MCF 10A (cell line): ENCODE measurements at regions of chr1 and their contacts with region 1.

Region 1: DNA sequence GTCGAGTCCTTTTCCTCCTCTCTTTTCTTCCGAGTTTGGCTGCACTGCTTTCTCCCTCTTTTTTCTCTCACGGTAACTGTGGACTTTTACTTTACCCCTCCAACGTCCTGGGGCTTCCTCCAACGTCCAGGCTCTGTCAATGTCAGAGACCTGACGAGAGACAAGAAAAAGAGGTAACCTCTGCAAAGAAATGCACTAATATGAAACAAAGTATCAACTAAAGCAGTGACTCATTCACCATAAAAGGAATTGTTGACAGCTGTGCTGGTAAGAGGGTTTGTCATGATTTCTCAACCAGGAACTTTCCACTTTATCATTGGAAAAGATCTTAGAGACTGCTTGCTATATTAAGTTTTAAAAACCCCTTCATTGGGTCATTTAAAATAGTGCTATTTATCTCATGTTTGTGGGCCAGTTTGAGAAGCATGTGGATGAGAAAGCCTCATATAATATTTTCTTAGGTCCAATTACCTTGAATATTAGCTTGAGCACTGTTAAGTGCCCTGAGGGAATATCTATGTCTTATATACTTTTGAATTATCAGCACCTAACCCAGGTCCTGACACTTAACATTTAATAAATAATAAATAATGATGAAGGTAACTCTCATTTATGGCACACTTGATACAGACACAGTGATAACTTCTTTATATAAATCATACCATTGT is at the start of gene GBP2:
- DNase-seq: peak; percentile 84
- H3K4me3 Mint-ChIP-seq: peak within 1 kb of the TSS; percentile 73
- H3K27ac Mint-ChIP-seq: peak within 1 kb of the TSS; percentile 90
- H3K4me1 Mint-ChIP-seq: peaks cover 22% of the 10 kb centered on the region
- H3K27me3 Mint-ChIP-seq: no peaks in the 10 kb centered on the region
- CTCF ChIP-seq: no peak
- total RNA-seq, gene GBP2: 1.7 and 2.2 TPM in 2 replicates

Region 2: DNA sequence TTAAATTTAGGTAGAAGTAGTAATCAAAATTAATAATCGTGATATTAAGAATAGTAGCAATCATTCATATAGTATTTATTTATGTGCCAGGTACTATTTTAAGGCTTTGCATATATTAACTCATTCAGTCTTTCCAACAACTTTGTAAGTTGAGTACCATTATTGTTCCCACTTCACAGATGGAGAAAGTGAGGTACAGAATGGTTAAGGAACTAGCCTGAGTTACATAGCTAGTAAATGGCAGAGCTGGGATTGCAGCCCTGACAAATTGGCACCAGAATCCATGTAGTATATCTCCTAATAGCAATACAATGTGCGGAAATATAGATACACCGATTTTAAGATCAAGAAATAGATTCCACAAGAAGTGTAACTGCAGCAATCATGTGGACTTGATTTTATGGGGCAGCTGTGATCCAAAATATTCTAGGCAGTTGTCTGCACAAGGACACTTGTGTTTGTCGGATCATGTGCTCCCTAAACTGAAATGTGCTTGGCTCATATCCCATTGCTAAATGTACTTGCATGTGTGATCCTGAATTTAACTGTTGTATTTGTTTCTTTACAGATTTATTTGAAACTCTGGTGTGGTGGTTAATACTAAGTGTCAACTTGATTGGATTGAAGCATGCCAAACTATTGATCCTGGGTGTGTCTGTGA is 228.8 kb before region 1 on chr1:
- CTCF ChIA-PET with region 1: no interaction called
- POLR2A ChIA-PET with region 1: no interaction called
- intact Hi-C with region 1: no loop called
- DNase-seq: no peak
- H3K4me3 Mint-ChIP-seq: no peak overlapping the region
- H3K27ac Mint-ChIP-seq: no peak overlapping the region
- H3K4me1 Mint-ChIP-seq: peaks cover 6% of the 10 kb centered on the region
- H3K27me3 Mint-ChIP-seq: no peaks in the 10 kb centered on the region
- CTCF ChIP-seq: no peak

Region 3: DNA sequence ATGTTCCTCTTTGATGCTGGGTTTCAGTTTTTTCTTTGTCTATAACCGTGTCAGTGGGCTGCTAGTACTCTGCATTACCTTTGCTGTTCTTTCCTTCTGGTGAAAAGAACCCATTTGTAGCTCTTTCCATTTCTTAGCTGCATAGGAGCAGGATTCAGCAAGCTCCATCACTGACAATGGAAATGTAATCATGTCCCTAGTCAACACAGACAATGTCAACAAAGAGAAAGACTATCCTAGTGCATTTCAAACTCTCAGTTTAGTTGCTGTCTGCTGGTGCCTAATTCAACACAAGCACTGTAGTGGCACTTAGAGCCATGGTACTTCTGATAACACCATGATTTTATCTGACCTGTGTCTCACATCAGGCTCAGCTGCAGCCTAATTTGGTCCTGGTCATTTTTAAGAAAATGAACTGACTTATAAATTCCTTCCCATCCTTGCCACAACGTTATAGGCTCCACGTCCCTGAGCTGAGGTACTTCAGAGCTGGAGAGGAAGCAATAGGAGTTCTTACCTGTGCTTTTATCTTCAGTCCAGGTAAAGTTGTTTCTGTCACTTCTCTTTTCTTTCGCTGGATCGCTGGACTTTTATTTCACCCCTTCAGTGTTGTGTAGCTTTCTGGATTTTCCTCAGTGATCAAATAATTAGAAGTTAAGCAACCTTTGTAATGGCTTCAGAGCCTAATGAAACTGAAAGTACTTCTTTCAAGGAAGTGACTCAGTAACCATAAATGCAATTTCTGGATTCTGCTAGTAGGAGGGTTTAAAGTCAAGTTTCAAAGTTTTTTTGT is 103.7 kb before region 1 on chr1 and contains the start of gene GBP3:
- CTCF ChIA-PET with region 1: no interaction called
- POLR2A ChIA-PET with region 1: interaction called, 15 read pairs
- intact Hi-C with region 1: no loop called
- DNase-seq: peak; percentile 59
- H3K4me3 Mint-ChIP-seq: peak within 1 kb of the TSS; percentile 80
- H3K27ac Mint-ChIP-seq: peak within 1 kb of the TSS; percentile 86
- H3K4me1 Mint-ChIP-seq: peaks cover 15% of the 10 kb centered on the region
- H3K27me3 Mint-ChIP-seq: no peaks in the 10 kb centered on the region
- CTCF ChIP-seq: no peak
- total RNA-seq, gene GBP3: 19.4 and 20.1 TPM in 2 replicates

Region 4: DNA sequence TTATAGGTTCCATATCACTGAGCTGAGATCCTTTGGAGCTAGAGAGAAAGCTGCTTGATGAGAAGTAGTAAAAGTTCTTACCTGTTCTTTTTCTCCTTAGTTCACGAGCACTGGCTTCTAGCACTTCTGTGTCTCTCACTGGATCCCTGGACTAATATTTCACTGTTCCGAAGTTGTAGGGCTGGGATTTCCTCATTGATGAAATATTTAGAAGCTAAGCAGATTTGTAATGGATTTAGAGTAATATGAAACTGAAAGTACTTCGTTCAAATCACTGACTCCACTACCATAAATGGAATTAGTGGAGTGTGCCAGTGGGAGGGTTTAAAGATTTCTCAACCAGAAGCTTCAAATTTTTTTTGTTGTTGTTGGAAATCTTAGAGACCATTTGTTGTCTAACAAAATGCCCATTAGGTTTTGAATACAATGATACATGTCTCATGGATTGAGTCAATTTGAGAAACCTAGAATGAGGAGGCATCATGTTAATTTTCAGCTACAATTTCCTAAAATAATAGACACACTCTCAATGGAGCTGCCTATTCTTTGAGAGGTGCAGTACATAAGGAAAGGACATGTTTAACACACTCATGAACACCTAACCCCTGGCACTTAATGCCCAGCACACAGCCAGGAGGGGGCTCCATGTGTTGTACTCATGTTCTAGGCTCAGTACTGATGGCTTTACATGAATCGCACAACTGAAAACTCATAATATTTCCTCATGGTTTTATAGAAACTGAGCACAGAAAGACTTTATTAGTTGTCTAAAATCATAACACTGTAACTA is 60.8 kb before region 1 on chr1 and contains the start of gene GBP1:
- CTCF ChIA-PET with region 1: no interaction called
- POLR2A ChIA-PET with region 1: interaction called, 13 read pairs
- intact Hi-C with region 1: no loop called
- DNase-seq: peak; percentile 79
- H3K4me3 Mint-ChIP-seq: peak within 1 kb of the TSS; percentile 76
- H3K27ac Mint-ChIP-seq: peak within 1 kb of the TSS; percentile 91
- H3K4me1 Mint-ChIP-seq: peaks cover 13% of the 10 kb centered on the region
- H3K27me3 Mint-ChIP-seq: no peaks in the 10 kb centered on the region
- CTCF ChIP-seq: no peak
- total RNA-seq, gene GBP1: 10.4 and 10.6 TPM in 2 replicates

Region 5: DNA sequence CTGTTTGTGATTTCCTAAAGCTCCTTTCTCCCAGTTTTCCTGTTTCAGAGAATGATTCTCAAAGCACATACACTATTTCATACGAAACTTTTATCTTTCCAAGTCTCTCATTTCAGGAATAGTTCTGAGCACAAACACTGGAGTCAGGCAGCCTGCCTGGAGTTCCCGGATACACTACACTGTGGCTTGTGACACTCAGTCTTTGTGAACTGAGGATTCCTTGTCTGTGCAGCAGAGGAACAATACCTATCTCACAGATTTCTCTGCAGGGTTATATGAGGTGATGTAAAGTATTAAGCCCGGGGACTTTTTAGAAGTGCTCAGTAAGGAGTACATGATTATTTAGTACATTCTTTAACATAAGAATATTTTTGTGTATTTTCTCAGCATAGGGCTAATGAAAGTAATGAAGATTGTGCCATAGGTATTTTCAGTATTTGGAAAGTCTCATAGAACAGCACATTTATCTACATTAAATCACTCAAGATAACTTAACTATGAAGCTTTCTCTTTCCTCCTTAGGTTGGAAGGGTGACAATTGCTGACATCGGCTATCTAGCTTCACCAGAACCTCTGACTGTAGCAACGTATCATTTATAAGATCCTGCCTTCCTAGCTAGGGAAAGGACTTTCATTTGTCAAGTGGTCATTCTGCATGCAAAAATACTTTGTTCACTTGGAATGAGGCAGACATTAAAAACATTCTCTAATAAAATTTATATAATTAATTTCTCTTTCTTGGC is 13.0 kb before region 1 on chr1:
- CTCF ChIA-PET with region 1: no interaction called
- POLR2A ChIA-PET with region 1: interaction called, 12 read pairs
- intact Hi-C with region 1: no loop called
- DNase-seq: no peak
- H3K4me3 Mint-ChIP-seq: no peak overlapping the region
- H3K27ac Mint-ChIP-seq: no peak overlapping the region
- H3K4me1 Mint-ChIP-seq: no peaks in the 10 kb centered on the region
- H3K27me3 Mint-ChIP-seq: no peaks in the 10 kb centered on the region
- CTCF ChIP-seq: no peak